ENCODE measurements at regions of chr10 and their contacts with region 1.

Region 1: DNA sequence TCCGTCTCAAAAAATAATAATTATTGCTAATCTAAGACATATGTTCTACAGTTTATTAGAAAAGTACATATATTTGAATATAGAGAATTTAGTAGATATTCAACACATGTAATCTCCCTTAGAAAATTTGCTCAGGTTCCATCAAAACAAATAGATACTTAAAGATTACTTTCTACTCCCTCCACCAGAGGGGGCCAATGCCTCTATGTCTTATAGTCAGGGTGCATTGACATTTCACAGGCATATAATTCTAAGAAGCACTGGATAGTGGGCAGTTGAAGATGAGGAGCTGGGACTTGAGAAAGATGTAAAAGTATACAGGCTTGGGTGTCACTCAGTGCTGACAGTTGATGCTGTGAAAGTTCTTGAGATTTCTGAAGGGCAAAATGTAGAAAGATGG is 301.6 kb upstream of the HPS1 start:
- DNase-seq: no peak
- ATAC-seq: peak; percentile 50; the same call in 2 of the 3 replicates
- H3K4me3 ChIP-seq: no peak overlapping the region
- H3K27ac ChIP-seq: no peak overlapping the region
- H3K4me1 ChIP-seq: no peaks in the 10 kb centered on the region
- H3K27me3 ChIP-seq: no peaks in the 10 kb centered on the region
- CTCF ChIP-seq: peak; percentile 36 to 41 (median 36); a peak in 4 of 6 replicates
- EP300 ChIP-seq: no peak
- POLR2A ChIP-seq: no peak
- RAD21 ChIP-seq: peak; percentile 59

Region 2: DNA sequence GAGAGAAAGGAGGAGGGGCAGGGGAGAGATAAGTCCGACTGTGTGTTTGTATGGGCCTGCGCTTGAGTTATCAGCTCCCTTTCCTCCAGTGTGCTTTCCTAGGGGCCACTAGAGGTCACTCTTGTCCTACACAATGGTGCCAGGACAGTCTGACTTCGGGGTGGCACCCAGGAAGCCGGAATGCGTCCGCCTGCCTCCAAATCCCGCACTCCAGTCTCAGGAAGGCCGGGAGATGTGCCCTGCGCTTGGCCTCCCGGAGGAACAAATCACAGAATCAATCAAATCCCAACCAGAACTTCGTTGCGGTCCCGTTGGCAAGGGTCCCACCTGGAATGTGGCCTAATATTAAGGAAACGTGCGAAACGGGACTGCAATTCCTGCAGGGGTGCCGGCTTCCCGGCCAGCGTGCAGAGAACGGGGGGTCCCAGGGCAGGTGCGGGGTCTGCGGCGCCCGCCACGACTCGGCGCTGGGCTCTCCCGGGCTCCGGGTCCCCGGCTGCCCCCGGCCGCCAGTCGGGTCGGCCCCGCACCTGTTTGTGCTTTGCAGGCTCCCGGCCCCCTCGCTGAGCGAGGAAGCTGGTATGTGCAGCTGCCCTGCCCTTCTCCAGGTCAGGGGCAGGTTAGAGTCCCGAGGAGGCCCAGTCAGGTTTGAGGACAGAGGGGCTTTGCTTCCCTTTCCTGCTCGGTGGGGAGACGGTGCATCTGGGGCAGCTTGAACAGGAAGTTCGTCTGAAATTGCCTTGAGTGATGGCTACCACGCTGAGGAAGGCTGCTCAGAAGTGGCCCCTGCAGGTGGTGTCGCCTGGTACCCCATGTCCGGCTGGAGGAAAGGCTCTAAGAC is 280.6 kb before region 1 on chr10:
- CTCF ChIA-PET with region 1: interaction called, 4 read pairs
- POLR2A ChIA-PET with region 1: no interaction called
- RAD21 ChIA-PET with region 1: no interaction called
- SMC1A ChIA-PET with region 1: no interaction called
- in situ Hi-C with region 1: no loop called
- intact Hi-C with region 1: loop called (anchors 5 kb)
- DNase-seq: peak; percentile 50
- ATAC-seq: peak; percentile 100
- H3K4me3 ChIP-seq: peak overlapping the region; percentile 71
- H3K27ac ChIP-seq: no peak overlapping the region
- H3K4me1 ChIP-seq: no peaks in the 10 kb centered on the region
- H3K27me3 ChIP-seq: peaks cover 0 to 5% of the 10 kb centered on the region in 2 experiments; a peak in 3 of 4 replicates
- CTCF ChIP-seq: peak; percentile 86 to 94 (median 87)
- EP300 ChIP-seq: no peak
- POLR2A ChIP-seq: peak; percentile 34; the same call in 1 of the 2 replicates
- RAD21 ChIP-seq: peak; percentile 96

Region 3: GRCh38 chr10:98673171-98673782 is 75.0 kb before region 1 on chr10:
- CTCF ChIA-PET with region 1: no interaction called
- POLR2A ChIA-PET with region 1: no interaction called
- RAD21 ChIA-PET with region 1: no interaction called
- SMC1A ChIA-PET with region 1: no interaction called
- in situ Hi-C with region 1: no loop called
- intact Hi-C with region 1: no loop called
- DNase-seq: no peak
- ATAC-seq: no peak
- H3K4me3 ChIP-seq: no peak overlapping the region
- H3K27ac ChIP-seq: no peak overlapping the region
- H3K4me1 ChIP-seq: no peaks in the 10 kb centered on the region
- H3K27me3 ChIP-seq: no peaks in the 10 kb centered on the region
- CTCF ChIP-seq: no peak
- EP300 ChIP-seq: no peak
- POLR2A ChIP-seq: no peak
- RAD21 ChIP-seq: no peak

Region 4: DNA sequence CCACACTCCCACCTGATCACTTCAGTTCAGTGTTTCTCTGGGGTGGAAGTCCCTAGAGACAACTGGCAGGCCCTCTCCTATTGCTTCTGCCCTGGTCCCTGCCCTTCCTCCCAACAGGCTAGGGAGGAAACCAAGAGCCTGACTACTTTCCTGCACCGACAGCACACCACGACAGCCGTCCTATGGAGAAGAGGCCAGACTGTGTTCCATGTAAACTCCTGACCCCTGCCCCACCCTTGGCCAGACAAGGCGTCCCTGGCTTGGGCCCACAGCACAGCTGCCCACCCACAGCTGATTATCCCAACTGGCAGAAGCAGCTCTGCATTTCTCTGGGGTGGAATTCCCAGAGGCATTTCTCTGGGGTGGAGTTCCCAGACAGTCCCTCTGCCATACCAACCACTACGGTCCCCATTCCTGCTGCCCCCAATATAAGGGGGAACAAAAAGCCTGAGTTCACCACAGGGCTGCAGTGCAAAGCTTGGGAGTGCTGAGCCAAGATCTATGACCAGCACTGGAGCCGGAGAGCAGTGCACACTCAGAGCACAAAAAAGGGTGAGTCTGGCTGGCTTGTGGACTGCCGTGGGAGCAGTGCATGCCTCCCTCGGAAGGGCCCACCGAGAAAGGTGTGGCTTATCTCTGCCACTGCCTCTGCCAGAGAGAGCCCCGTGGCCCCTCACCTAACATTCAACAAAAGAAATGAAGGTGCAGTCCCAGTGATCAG is 293.9 kb after region 1 on chr10:
- CTCF ChIA-PET with region 1: no interaction called
- POLR2A ChIA-PET with region 1: no interaction called
- RAD21 ChIA-PET with region 1: no interaction called
- SMC1A ChIA-PET with region 1: no interaction called
- in situ Hi-C with region 1: no loop called
- intact Hi-C with region 1: loop called (anchors 5 kb)
- DNase-seq: no peak
- ATAC-seq: no peak
- H3K4me3 ChIP-seq: no peak overlapping the region
- H3K27ac ChIP-seq: no peak overlapping the region
- H3K4me1 ChIP-seq: no peaks in the 10 kb centered on the region
- H3K27me3 ChIP-seq: no peaks in the 10 kb centered on the region
- CTCF ChIP-seq: no peak
- EP300 ChIP-seq: no peak
- POLR2A ChIP-seq: no peak
- RAD21 ChIP-seq: no peak

Region 5: DNA sequence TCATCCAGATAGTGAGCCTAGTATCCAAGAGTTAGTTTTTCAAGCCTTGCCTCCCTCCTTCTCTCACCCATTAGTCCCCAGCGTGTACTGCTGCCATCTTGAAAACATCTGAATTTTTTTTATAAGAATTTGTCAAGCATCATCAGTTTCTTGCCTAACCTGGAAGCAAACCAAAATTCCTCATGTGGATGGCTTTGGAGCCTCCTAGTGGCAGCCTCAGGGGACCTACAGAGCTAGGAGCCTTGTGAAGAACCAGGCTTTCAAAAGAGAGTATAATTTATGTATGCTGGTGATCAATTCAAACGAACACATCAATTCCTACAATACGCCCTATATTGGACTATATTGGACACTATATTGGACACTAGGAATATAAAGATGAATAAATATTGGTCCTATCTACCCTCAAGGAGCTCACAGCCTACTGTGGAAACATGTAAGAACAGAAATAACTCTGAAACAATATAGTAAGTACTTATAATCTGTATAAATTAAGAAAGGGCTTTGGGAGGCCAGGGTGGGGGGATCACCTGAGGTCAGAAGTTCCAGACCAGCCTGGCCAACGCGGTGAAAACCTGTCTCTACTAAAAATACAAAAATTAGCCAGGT is 423.9 kb after region 1 on chr10:
- CTCF ChIA-PET with region 1: no interaction called
- POLR2A ChIA-PET with region 1: no interaction called
- RAD21 ChIA-PET with region 1: no interaction called
- SMC1A ChIA-PET with region 1: no interaction called
- in situ Hi-C with region 1: no loop called
- intact Hi-C with region 1: loop called (anchors 5 kb)
- DNase-seq: no peak
- ATAC-seq: no peak
- H3K4me3 ChIP-seq: no peak overlapping the region
- H3K27ac ChIP-seq: no peak overlapping the region
- H3K4me1 ChIP-seq: no peaks in the 10 kb centered on the region
- H3K27me3 ChIP-seq: no peaks in the 10 kb centered on the region
- CTCF ChIP-seq: peak; percentile 26 to 44 (median 44); a peak in 4 of 6 replicates
- EP300 ChIP-seq: no peak
- POLR2A ChIP-seq: no peak
- RAD21 ChIP-seq: peak; percentile 43

Region 6: GRCh38 chr10:99248824-99249223 is 500.5 kb after region 1 on chr10:
- CTCF ChIA-PET with region 1: interaction called, 5 read pairs
- POLR2A ChIA-PET with region 1: no interaction called
- RAD21 ChIA-PET with region 1: interaction called, 3 read pairs
- SMC1A ChIA-PET with region 1: interaction called, 3 read pairs
- in situ Hi-C with region 1: loop called (anchors 10 kb)
- intact Hi-C with region 1: loop called (anchors 10 kb)
- DNase-seq: no peak
- ATAC-seq: no peak
- H3K4me3 ChIP-seq: no peak overlapping the region
- H3K27ac ChIP-seq: no peak overlapping the region
- H3K4me1 ChIP-seq: no peaks in the 10 kb centered on the region
- H3K27me3 ChIP-seq: no peaks in the 10 kb centered on the region
- CTCF ChIP-seq: no peak
- EP300 ChIP-seq: no peak
- POLR2A ChIP-seq: no peak
- RAD21 ChIP-seq: no peak

Region 7: GRCh38 chr10:99276848-99277486 is 528.7 kb after region 1 on chr10:
- CTCF ChIA-PET with region 1: no interaction called
- POLR2A ChIA-PET with region 1: no interaction called
- RAD21 ChIA-PET with region 1: no interaction called
- SMC1A ChIA-PET with region 1: no interaction called
- in situ Hi-C with region 1: no loop called
- intact Hi-C with region 1: loop called (anchors 1 kb)
- DNase-seq: no peak
- ATAC-seq: no peak
- H3K4me3 ChIP-seq: no peak overlapping the region
- H3K27ac ChIP-seq: no peak overlapping the region
- H3K4me1 ChIP-seq: no peaks in the 10 kb centered on the region
- H3K27me3 ChIP-seq: no peaks in the 10 kb centered on the region
- CTCF ChIP-seq: peak; percentile 24 to 33 (median 29); a peak in 4 of 6 replicates
- EP300 ChIP-seq: no peak
- POLR2A ChIP-seq: no peak
- RAD21 ChIP-seq: peak; percentile 57

Measured in GM12878 (cell line).